ENCODE measurements at regions of chr18 and their contacts with region 1.

Region 1: DNA sequence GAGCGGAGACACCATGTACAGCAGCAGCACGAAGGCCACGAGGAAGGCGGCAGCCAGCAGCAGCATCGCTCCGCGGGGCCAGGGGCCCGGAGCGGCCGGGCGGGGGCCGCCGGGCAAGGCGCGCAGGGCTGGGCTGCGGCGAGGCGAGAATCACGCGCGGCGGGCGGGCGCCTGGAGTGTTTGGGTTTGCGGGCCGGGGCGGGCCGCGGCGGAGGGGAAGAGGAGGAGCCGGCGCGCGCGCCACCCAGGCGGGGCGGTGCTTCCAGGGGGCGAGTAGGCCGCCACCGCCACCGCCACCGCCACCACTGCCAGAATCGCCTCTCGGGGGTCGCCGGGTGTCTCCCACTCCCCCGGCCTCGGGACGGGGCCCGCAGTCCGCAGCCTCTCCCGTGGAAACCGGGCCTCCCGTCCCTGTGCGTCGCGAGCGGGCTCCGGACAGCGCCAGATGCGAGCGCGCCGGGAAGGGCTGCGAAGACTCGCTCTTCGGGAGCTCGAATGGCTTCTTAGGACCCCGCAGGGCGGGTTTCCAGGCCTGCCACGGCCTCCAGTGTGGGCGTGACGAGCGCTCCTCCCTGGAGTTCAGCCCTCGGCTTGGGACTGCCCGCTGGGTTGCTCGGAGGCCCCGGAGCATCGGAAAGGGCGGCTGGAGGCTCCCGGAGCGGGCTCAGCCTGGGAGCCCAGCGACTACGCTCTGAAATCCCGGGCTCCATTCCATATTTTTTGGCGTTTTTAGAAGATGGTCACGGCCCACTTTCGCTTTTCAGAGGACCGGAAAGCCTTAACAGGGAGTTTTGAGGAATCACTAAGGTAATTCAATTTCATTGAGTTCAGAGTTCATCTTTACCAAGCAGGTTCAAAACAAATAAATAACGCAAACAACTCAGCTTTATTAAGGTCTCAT is at the start of gene KDSR:
- DNase-seq: peak; percentile 86
- ATAC-seq: peak; percentile 88
- H3K4me3 Mint-ChIP-seq: peak within 1 kb of the TSS; percentile 81
- H3K27ac Mint-ChIP-seq: peak within 1 kb of the TSS; percentile 86
- H3K4me1 Mint-ChIP-seq: peaks cover 39% of the 10 kb centered on the region
- H3K27me3 Mint-ChIP-seq: no peaks in the 10 kb centered on the region
- total RNA-seq, gene KDSR: 38.2 to 38.4 TPM

Region 2: DNA sequence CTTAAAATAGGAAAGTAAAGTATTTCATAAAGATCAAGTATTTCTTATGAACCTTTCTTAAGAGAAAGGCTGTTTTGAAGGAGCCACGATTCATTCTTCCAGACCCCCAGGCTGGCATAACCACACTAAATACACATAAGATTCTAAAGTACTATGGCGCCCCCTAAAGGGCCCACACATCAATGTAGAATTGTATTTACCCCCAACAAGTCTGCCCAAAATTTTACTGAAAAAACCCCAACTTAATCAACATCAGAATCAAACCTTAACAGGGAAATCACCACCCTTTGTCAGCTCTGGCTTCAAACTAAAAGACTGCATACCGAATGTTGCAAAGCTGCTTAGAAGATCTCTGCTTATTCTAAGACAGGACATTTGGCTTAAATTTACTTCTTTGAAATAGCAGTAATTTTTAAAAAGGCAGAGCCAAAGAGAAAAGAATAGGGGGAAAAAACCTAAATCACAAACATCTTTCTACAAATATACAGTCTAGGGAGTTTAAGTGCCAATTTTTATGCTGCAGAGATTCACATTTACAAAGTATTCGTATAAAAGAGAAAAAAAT is 27.3 kb before region 1 on chr18:
- CTCF ChIA-PET with region 1: interaction called, 32 read pairs
- POLR2A ChIA-PET with region 1: no interaction called
- DNase-seq: peak; percentile 71
- ATAC-seq: peak; percentile 64
- H3K4me3 Mint-ChIP-seq: no peak overlapping the region
- H3K27ac Mint-ChIP-seq: no peak overlapping the region
- H3K4me1 Mint-ChIP-seq: peaks cover 3% of the 10 kb centered on the region
- H3K27me3 Mint-ChIP-seq: no peaks in the 10 kb centered on the region

Region 3: GRCh38 chr18:63422087-63422809 is 54.9 kb after region 1 on chr18 and contains the start of gene VPS4B:
- CTCF ChIA-PET with region 1: interaction called, 5 read pairs
- POLR2A ChIA-PET with region 1: interaction called, 10 read pairs
- DNase-seq: peak; percentile 100
- ATAC-seq: peak; percentile 95
- H3K4me3 Mint-ChIP-seq: peak within 1 kb of the TSS; percentile 98
- H3K27ac Mint-ChIP-seq: peak within 1 kb of the TSS; percentile 98
- H3K4me1 Mint-ChIP-seq: peaks cover 23% of the 10 kb centered on the region
- H3K27me3 Mint-ChIP-seq: peaks cover 4% of the 10 kb centered on the region
- total RNA-seq, gene VPS4B: 62.8 to 67.2 TPM

Measured in activated CD8-positive, alpha-beta T cell treated with anti-CD3 and anti-CD28 coated beads, Interleukin-2, amount 10 ng/mL, durations not matched to agents 7 days and 5 days (primary cell).